ENCODE measurements at regions of chr7 and their contacts with region 1.

Region 1: GRCh38 chr7:74483402-74484336 is 30.0 kb downstream of the GTF2IRD1 start:
- DNase-seq: no peak
- H3K4me3 Mint-ChIP-seq: no peak overlapping the region
- H3K27ac Mint-ChIP-seq: no peak overlapping the region
- H3K4me1 Mint-ChIP-seq: no peaks in the 10 kb centered on the region
- H3K27me3 Mint-ChIP-seq: peaks cover 3% of the 10 kb centered on the region

Region 2: GRCh38 chr7:74495112-74496086 is 11.7 kb after region 1 on chr7:
- CTCF ChIA-PET with region 1: no interaction called
- POLR2A ChIA-PET with region 1: interaction called, 3 read pairs
- intact Hi-C with region 1: loop called (anchors 1 kb)
- DNase-seq: no peak
- H3K4me3 Mint-ChIP-seq: no peak overlapping the region
- H3K27ac Mint-ChIP-seq: no peak overlapping the region
- H3K4me1 Mint-ChIP-seq: no peaks in the 10 kb centered on the region
- H3K27me3 Mint-ChIP-seq: no peaks in the 10 kb centered on the region

Measured in activated CD4-positive, alpha-beta memory T cell treated with anti-CD3 and anti-CD28 coated beads for 36 hours (primary cell).